Vagina (tissue), 2 donors: ENCODE measurements at regions of chr13 and their contacts with region 1.

Region 1: DNA sequence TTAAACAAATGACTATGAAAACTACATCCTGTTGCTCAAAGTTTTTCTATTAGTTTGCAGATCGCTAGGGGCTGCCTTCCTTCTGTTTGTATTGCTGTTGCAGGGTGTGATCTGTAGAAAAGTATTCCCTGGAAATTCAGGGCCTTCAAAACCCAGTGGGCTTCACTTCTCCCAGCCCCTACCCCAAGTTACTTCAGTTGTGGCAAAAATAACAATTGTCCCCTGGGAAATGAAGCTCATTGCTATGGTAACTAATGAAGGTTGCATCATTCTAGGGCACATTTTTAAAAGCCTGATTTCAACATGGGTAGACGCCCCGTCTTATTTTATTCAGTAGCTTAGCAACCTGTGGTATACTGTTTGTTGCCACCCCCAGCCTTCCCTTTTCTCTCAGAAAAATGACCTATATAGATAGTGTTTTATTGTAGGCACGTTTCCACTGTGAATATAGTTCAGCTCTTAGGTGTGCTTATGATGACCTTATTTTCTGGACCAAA is 60.9 kb downstream of the WDFY2 start:
- DNase-seq: no peak
- H3K4me3 ChIP-seq: no peak overlapping the region
- H3K27ac ChIP-seq: peak overlapping the region; percentile 21
- H3K4me1 ChIP-seq: peaks cover 36% of the 10 kb centered on the region
- H3K27me3 ChIP-seq: no peaks in the 10 kb centered on the region
- CTCF ChIP-seq: no peak
- POLR2A ChIP-seq: no peak

Region 2: DNA sequence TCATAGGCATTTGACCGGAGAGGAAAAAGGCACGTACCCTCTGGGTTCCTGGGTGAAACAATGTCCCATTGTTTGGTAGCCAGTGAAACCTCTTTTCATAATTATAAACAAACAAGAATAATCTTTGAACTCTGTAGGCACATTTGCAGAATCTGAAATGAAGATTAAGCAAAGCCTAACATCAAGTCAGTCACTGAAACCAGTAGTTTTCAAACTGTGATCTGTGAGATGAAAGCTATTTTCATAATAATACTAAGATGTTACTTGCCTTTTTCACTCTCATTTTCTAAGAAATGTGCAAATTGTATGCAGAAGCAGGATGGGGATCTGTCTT is 44.4 kb after region 1 on chr13:
- intact Hi-C with region 1: no loop called
- DNase-seq: no peak
- H3K4me3 ChIP-seq: no peak overlapping the region
- H3K27ac ChIP-seq: no peak overlapping the region
- H3K4me1 ChIP-seq: no peaks in the 10 kb centered on the region
- H3K27me3 ChIP-seq: no peaks in the 10 kb centered on the region
- CTCF ChIP-seq: no peak
- POLR2A ChIP-seq: no peak

Region 3: DNA sequence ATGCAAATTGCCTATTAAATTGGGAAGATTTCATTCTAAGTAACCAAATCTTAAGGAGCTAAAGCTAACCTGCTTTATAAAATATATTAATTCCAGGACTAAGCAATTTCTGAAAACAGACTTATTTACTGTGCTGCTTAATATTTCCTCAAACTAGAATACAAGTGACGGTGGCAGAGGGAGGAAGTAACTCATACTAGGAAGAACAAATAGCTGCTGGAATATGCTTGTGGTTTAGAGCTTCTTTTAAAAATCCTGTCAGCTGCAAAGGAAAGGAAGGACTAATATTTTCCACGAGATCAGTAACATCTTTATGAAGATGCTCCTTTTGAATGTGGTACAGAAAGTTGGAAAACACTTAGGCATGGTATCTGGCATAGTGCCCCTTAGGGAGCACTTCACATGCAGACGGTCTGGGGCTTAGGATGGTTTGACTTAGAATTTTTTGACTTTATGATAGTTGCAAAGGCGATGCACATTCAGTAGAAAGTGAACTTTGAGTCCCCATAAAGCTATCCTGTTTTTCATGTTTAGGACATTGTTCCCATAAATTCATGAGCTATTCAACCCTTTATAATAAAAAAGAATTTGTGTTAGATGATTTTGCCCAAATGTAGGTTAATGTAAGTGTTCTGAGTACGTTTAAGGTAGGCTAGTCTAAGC is 993.6 kb after region 1 on chr13:
- intact Hi-C with region 1: loop called (anchors 5 kb)
- DNase-seq: no peak
- H3K4me3 ChIP-seq: no peak overlapping the region
- H3K27ac ChIP-seq: no peak overlapping the region
- H3K4me1 ChIP-seq: no peaks in the 10 kb centered on the region
- H3K27me3 ChIP-seq: no peaks in the 10 kb centered on the region
- CTCF ChIP-seq: no peak
- POLR2A ChIP-seq: no peak